ENCODE measurements at regions of chr2 and their contacts with region 1.

Region 1: GRCh38 chr2:221573430-221574230 is 1.5 kb upstream of the EPHA4 start:
- DNase-seq: no peak
- ATAC-seq: peak; percentile 89
- H3K4me3 ChIP-seq: peak overlapping the region; percentile 47 to 73
- H3K27ac ChIP-seq: no peak overlapping the region
- H3K4me1 ChIP-seq: peaks cover 7% of the 10 kb centered on the region
- H3K27me3 ChIP-seq: peaks cover 30% of the 10 kb centered on the region
- CTCF ChIP-seq: peak; percentile 94

Region 2: GRCh38 chr2:219736209-219736608 is 1837.4 kb before region 1 on chr2:
- CTCF ChIA-PET with region 1: interaction called, 3 read pairs
- POLR2A ChIA-PET with region 1: no interaction called
- in situ Hi-C with region 1: no loop called
- intact Hi-C with region 1: loop called (anchors 5 kb)
- DNase-seq: peak; percentile 15
- ATAC-seq: peak; percentile 71
- H3K4me3 ChIP-seq: no peak overlapping the region
- H3K27ac ChIP-seq: no peak overlapping the region
- H3K4me1 ChIP-seq: no peaks in the 10 kb centered on the region
- H3K27me3 ChIP-seq: 0 out of 2 replicates have a peak, but pooled peaks cover 2% of the 10 kb centered on the region
- CTCF ChIP-seq: peak; percentile 59; the same call in 1 of the 2 replicates

Region 3: DNA sequence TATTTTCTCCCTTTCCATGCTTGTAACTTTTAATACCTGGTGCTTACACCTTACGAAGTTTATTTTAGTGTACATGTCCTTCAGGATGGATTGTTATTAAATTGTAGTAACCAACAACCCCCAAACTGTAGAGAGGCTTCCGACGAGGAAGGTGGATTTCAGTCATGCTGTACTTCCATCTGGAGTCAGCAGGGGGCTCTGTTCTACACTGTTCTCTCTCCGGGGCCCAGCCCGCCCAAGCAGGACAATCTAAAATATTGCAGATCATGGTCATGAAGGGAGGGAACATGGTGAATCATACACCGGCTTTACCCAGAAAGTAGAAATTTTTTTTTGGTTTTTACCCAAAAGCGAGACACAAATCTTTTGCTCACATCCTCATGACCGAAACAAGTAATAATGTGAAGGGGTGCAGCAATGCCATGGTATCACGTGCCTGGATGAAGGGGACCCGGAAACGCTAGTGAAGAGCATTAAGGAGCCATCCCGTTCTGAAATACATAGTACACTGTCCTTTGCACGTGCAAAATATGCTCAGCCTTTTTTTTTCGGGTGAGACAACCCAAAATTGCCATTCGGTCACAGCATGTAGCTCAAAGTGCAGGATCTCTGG is 886.3 kb before region 1 on chr2:
- CTCF ChIA-PET with region 1: no interaction called
- POLR2A ChIA-PET with region 1: no interaction called
- in situ Hi-C with region 1: no loop called
- intact Hi-C with region 1: loop called (anchors 2 kb)
- DNase-seq: peak; percentile 20
- ATAC-seq: peak; percentile 79
- H3K4me3 ChIP-seq: no peak overlapping the region
- H3K27ac ChIP-seq: no peak overlapping the region
- H3K4me1 ChIP-seq: no peaks in the 10 kb centered on the region
- H3K27me3 ChIP-seq: no peaks in the 10 kb centered on the region
- CTCF ChIP-seq: peak; percentile 80

Region 4: DNA sequence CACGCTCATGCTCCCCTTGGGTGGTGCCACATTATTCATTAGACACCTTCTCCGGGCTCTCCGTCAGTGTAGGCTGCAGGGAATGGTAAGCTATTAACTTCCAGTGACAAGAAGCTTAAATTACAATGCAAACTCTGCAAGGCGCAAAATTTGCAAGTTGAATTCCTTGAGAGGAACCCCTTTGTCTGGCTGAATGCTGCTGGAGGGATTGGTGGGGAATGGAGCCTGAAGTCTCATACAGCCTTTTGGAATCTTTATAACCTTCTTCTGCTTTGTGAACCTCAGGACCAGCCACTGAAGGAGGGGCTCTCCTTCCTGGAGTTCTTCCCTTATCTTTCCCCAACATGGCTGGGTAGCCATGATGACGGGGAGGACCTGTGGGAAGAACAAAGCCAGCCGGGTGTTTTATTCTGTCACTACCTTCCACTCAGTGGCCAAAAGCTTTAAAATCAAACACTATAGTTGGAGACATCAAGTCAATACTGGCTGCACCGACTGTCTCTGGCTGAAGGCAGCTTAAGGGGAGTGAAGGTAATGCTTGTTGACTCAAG is 219.4 kb after region 1 on chr2:
- CTCF ChIA-PET with region 1: no interaction called
- POLR2A ChIA-PET with region 1: no interaction called
- in situ Hi-C with region 1: no loop called
- intact Hi-C with region 1: no loop called
- DNase-seq: no peak
- ATAC-seq: no peak
- H3K4me3 ChIP-seq: no peak overlapping the region
- H3K27ac ChIP-seq: no peak overlapping the region
- H3K4me1 ChIP-seq: no peaks in the 10 kb centered on the region
- H3K27me3 ChIP-seq: no peaks in the 10 kb centered on the region
- CTCF ChIP-seq: no peak

Region 5: GRCh38 chr2:221969087-221969829 is 395.6 kb after region 1 on chr2:
- CTCF ChIA-PET with region 1: no interaction called
- POLR2A ChIA-PET with region 1: no interaction called
- in situ Hi-C with region 1: no loop called
- intact Hi-C with region 1: loop called (anchors 5 kb)
- DNase-seq: peak; percentile 5
- ATAC-seq: peak; percentile 82; the same call in 1 of the 2 replicates
- H3K4me3 ChIP-seq: no peak overlapping the region
- H3K27ac ChIP-seq: no peak overlapping the region
- H3K4me1 ChIP-seq: no peaks in the 10 kb centered on the region
- H3K27me3 ChIP-seq: no peaks in the 10 kb centered on the region; the same call in 1 of the 2 replicates
- CTCF ChIP-seq: peak; percentile 74; the same call in 1 of the 2 replicates

Measured in Panc1 (cell line).